ENCODE measurements at regions of chr4 and their contacts with region 1.

Region 1: GRCh38 chr4:147160908-147161513 is 215.3 kb upstream of the TTC29 start:
- DNase-seq: no peak
- H3K4me3 ChIP-seq: no peak overlapping the region
- H3K27ac ChIP-seq: no peak overlapping the region
- H3K4me1 ChIP-seq: no peaks in the 10 kb centered on the region
- H3K27me3 ChIP-seq: no peaks in the 10 kb centered on the region
- CTCF ChIP-seq: peak in 3 of 4 experiments; percentile 46 to 62 (median 57)
- POLR2A ChIP-seq: no peak

Region 2: GRCh38 chr4:147480891-147481576 is 320.0 kb after region 1 on chr4 and contains the start of gene EDNRA:
- intact Hi-C with region 1: loop called (anchors 10 kb)
- DNase-seq: no peak
- H3K4me3 ChIP-seq: peak within 1 kb of the TSS; percentile 38 to 39
- H3K27ac ChIP-seq: peak within 1 kb of the TSS; percentile 74 to 76
- H3K4me1 ChIP-seq: no peaks in the 10 kb centered on the region
- H3K27me3 ChIP-seq: no peaks in the 10 kb centered on the region
- CTCF ChIP-seq: no peak
- POLR2A ChIP-seq: no peak
- total RNA-seq, gene EDNRA: 17.8 to 27.3 TPM

Region 3: GRCh38 chr4:147518846-147519767 is 358.1 kb after region 1 on chr4:
- intact Hi-C with region 1: loop called (anchors 5 kb)
- DNase-seq: peak; percentile 53
- H3K4me3 ChIP-seq: no peak overlapping the region
- H3K27ac ChIP-seq: no peak overlapping the region
- H3K4me1 ChIP-seq: no peaks in the 10 kb centered on the region
- H3K27me3 ChIP-seq: no peaks in the 10 kb centered on the region
- CTCF ChIP-seq: peak in 3 of 4 experiments; percentile 64 to 72 (median 67)
- POLR2A ChIP-seq: no peak

Region 4: GRCh38 chr4:147590249-147590920 is 429.4 kb after region 1 on chr4:
- intact Hi-C with region 1: loop called (anchors 2 kb)
- DNase-seq: peak; percentile 25
- H3K4me3 ChIP-seq: no peak overlapping the region
- H3K27ac ChIP-seq: no peak overlapping the region
- H3K4me1 ChIP-seq: no peaks in the 10 kb centered on the region
- H3K27me3 ChIP-seq: no peaks in the 10 kb centered on the region
- CTCF ChIP-seq: peak; percentile 47 to 75 (median 74)
- POLR2A ChIP-seq: no peak

Measured in prostate gland (tissue), 2 donors.